CD4-positive, alpha-beta memory T cell (primary cell): ENCODE measurements at regions of chr12 and their contacts with region 1.

Region 1: GRCh38 chr12:95473884-95474659 is at the start of gene METAP2:
- DNase-seq: peak; percentile 87 to 92 (median 88)
- H3K4me3 ChIP-seq: peak within 1 kb of the TSS; percentile 83 to 99
- H3K4me3 Mint-ChIP-seq: peak within 1 kb of the TSS; percentile 99 to 100 (median 100)
- H3K27ac ChIP-seq: peak within 1 kb of the TSS; percentile 78
- H3K27ac Mint-ChIP-seq: peak within 1 kb of the TSS; percentile 90 to 100 (median 98)
- H3K4me1 ChIP-seq: peaks cover 50% of the 10 kb centered on the region
- H3K4me1 Mint-ChIP-seq: peaks cover 36 to 64% (median 54%) of the 10 kb centered on the region in 4 donors
- H3K27me3 ChIP-seq: no peaks in the 10 kb centered on the region
- H3K27me3 Mint-ChIP-seq: no peaks in the 10 kb centered on the region
- total RNA-seq, gene METAP2: 50.7 to 52.7 TPM

Region 2: DNA sequence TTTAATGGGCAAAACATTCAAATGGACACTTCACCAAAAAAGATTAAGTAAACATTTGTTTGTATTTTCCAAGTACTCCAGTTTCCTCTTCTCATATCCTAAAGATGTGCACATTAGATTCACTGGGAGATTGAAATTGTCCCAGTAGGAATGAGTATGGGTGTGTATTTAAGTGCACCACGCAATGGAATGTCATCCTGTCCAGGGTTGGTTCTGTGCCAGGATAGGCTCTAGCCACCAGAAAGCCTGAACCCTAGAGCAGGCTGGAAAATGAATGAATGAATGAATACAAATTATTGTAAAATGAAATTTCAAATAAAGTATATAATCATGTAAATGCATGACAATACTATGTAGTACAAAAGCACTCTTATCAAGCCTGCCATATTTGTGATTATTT is 1028.4 kb before region 1 on chr12:
- CTCF ChIA-PET with region 1: no interaction called
- POLR2A ChIA-PET with region 1: no interaction called
- intact Hi-C with region 1: no loop called
- DNase-seq: no peak
- H3K4me3 ChIP-seq: no peak overlapping the region
- H3K4me3 Mint-ChIP-seq: no peak overlapping the region
- H3K27ac ChIP-seq: no peak overlapping the region
- H3K27ac Mint-ChIP-seq: no peak overlapping the region
- H3K4me1 ChIP-seq: no peaks in the 10 kb centered on the region
- H3K4me1 Mint-ChIP-seq: peaks cover 0 to 12% (median 11%) of the 10 kb centered on the region in 4 donors
- H3K27me3 ChIP-seq: no peaks in the 10 kb centered on the region
- H3K27me3 Mint-ChIP-seq: no peaks in the 10 kb centered on the region

Region 3: DNA sequence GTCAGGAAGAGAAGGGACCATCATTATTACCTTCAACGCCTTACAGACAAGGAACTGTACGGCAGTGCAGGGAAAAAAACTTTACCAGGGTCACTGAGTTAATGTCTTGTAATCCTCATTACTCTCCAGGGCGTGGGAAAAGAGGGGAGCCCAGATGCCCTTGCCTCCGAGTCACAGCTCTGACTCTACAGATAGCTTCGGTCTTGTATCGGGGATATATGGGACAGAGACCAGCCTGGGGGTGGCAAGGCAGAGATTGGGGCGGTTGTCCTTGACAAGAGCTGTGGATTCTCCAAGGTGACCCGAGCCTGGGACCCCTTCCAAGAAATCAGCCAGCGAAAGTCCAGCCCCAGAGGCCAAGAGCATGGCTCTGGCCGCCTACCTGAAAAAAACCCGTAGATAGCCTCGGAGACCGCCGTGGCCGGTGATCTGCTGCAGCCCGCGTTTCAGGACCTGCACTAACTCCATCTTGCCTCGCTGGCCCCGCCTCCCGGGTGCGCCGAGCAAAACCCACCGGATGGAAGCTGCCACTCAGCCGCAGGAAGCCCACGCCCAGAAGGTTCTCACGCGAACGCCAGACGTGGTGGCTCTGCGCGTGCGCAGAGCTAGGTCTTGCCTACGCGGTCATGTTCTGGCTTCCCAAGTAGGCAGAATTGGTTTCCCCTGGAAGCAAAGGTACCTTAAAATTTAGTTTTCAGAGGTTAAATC is 470.7 kb before region 1 on chr12 and contains the start of gene NDUFA12:
- CTCF ChIA-PET with region 1: no interaction called
- POLR2A ChIA-PET with region 1: interaction called, 13 read pairs
- intact Hi-C with region 1: loop called (anchors 5 kb)
- DNase-seq: peak; percentile 92 to 94 (median 93)
- H3K4me3 ChIP-seq: peak within 1 kb of the TSS; percentile 83 to 96
- H3K4me3 Mint-ChIP-seq: peak within 1 kb of the TSS; percentile 93 to 99 (median 95)
- H3K27ac ChIP-seq: peak within 1 kb of the TSS; percentile 80
- H3K27ac Mint-ChIP-seq: peak within 1 kb of the TSS; percentile 92 to 97 (median 96)
- H3K4me1 ChIP-seq: peaks cover 61% of the 10 kb centered on the region
- H3K4me1 Mint-ChIP-seq: peaks cover 32 to 55% (median 42%) of the 10 kb centered on the region in 4 donors
- H3K27me3 ChIP-seq: no peaks in the 10 kb centered on the region
- H3K27me3 Mint-ChIP-seq: no peaks in the 10 kb centered on the region
- total RNA-seq, gene NDUFA12: 55.5 to 61.5 TPM

Region 4: DNA sequence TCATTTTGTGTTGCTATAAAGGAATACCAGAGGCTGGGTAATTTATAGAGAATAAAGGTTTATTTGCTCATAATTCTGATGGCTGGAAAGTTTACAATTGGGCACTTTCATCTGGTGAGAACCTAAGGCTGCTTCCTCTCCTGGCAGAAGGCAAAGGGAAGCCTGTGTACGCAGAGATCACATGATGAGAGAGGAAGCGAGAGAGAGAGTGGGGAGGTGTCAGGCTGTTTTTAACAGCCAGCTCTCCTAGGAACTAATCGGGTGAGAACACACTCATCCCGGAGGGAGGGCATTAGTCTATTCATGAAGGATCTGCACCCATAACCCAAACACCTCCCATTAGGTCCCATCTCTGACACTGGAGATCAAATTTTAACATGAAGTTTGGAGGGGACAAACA is 45.6 kb before region 1 on chr12:
- CTCF ChIA-PET with region 1: no interaction called
- POLR2A ChIA-PET with region 1: interaction called, 21 read pairs
- intact Hi-C with region 1: no loop called
- DNase-seq: peak in 4 of 5 donors; percentile 5 to 43 (median 30)
- H3K4me3 ChIP-seq: no peak overlapping the region
- H3K4me3 Mint-ChIP-seq: peak overlapping the region in 7 of 8 donors; percentile 7 to 88 (median 53)
- H3K27ac ChIP-seq: no peak overlapping the region
- H3K27ac Mint-ChIP-seq: peak overlapping the region in 6 of 7 donors; percentile 13 to 85 (median 54)
- H3K4me1 ChIP-seq: no peaks in the 10 kb centered on the region
- H3K4me1 Mint-ChIP-seq: peaks cover 4 to 16% (median 8%) of the 10 kb centered on the region in 4 donors
- H3K27me3 ChIP-seq: no peaks in the 10 kb centered on the region
- H3K27me3 Mint-ChIP-seq: peaks cover 0 to 6% of the 10 kb centered on the region in 2 donors

Region 5: DNA sequence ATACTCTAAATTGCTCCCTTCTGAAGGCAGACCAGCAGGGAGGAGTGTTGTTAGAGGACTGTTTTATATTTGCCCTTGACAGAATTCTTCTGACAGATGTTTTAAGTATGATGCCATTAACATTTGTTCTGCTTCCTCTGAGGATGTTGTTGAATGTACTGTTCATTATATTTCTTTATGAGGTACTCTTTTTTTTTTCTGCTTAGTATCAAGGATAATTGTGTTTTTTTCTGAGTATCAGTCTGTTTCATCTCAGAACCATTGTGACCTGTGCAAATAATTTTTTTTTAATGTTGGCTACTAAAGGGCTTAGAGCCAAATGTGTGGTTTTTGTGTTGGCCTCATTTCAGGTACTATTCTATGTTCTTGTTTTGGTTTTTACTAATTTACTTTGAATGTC is 10.5 kb after region 1 on chr12:
- CTCF ChIA-PET with region 1: no interaction called
- POLR2A ChIA-PET with region 1: interaction called, 10 read pairs
- intact Hi-C with region 1: no loop called
- DNase-seq: no peak
- H3K4me3 ChIP-seq: no peak overlapping the region
- H3K4me3 Mint-ChIP-seq: no peak overlapping the region
- H3K27ac ChIP-seq: no peak overlapping the region
- H3K27ac Mint-ChIP-seq: peak overlapping the region in 6 of 7 donors; percentile 9 to 62 (median 44)
- H3K4me1 ChIP-seq: peaks cover 18% of the 10 kb centered on the region
- H3K4me1 Mint-ChIP-seq: peaks cover 30 to 38% (median 34%) of the 10 kb centered on the region in 4 donors
- H3K27me3 ChIP-seq: no peaks in the 10 kb centered on the region
- H3K27me3 Mint-ChIP-seq: no peaks in the 10 kb centered on the region

Region 6: GRCh38 chr12:95548539-95549391 is 74.7 kb after region 1 on chr12:
- CTCF ChIA-PET with region 1: no interaction called
- POLR2A ChIA-PET with region 1: interaction called, 7 read pairs
- intact Hi-C with region 1: loop called (anchors 5 kb)
- DNase-seq: peak; percentile 66 to 73 (median 71)
- H3K4me3 ChIP-seq: peak overlapping the region in 1 of 2 donors; percentile 68
- H3K4me3 Mint-ChIP-seq: peak overlapping the region; percentile 83 to 92 (median 88)
- H3K27ac ChIP-seq: peak overlapping the region; percentile 60
- H3K27ac Mint-ChIP-seq: peak overlapping the region; percentile 45 to 93 (median 85)
- H3K4me1 ChIP-seq: peaks cover 13% of the 10 kb centered on the region
- H3K4me1 Mint-ChIP-seq: peaks cover 14 to 60% (median 27%) of the 10 kb centered on the region in 4 donors
- H3K27me3 ChIP-seq: no peaks in the 10 kb centered on the region
- H3K27me3 Mint-ChIP-seq: peaks cover 6 to 17% of the 10 kb centered on the region in 2 donors

Region 7: DNA sequence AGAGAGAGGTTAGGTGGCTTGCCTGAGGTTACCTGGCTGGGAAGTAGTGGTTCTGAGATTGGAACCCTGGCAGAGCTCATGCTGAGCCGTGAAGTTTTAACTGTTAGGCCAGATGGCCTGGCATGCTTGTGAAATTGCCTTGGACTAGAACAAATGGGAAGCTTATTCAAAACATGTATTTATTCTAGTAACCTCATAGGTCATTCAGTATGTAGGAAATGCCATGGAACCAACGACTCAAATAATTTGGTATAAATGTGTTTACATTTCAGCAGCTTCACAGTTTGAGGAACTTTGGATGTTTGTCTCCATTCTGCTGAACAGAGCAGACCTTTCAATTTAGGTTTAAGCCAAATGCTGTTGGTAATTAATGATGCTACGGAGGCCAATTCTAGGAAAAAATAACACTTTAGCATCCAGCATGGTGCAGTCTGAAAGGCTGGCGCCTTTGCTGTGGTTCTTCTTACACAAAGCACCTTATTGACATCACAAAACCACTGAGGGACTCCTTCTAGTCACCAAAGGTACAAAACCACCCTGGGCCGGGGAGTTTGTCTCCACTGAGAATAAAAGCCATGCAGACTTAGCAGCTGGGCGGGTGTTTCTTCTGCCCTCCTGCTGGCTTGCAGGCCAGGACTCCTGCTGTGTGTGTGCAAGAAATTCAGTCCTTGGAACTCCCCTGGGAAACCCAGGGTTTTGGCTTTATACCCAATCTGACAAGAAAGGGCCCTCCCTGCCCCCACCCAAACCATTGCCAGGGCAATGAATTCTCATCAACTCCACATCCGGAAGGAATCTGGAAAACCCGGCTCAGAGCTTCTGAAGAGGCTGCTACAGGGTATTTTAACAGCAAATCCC is 784.3 kb after region 1 on chr12:
- CTCF ChIA-PET with region 1: no interaction called
- POLR2A ChIA-PET with region 1: no interaction called
- intact Hi-C with region 1: no loop called
- DNase-seq: peak in 3 of 5 donors; percentile 30 to 69 (median 45)
- H3K4me3 ChIP-seq: no peak overlapping the region
- H3K4me3 Mint-ChIP-seq: peak overlapping the region in 1 of 8 donors; percentile 25
- H3K27ac ChIP-seq: no peak overlapping the region
- H3K27ac Mint-ChIP-seq: peak overlapping the region in 2 of 7 donors; percentile 48 to 61
- H3K4me1 ChIP-seq: peaks cover 49% of the 10 kb centered on the region
- H3K4me1 Mint-ChIP-seq: peaks cover 6 to 27% (median 14%) of the 10 kb centered on the region in 4 donors
- H3K27me3 ChIP-seq: no peaks in the 10 kb centered on the region
- H3K27me3 Mint-ChIP-seq: no peaks in the 10 kb centered on the region